ENCODE measurements at regions of chr1 and their contacts with region 1.

Region 1: DNA sequence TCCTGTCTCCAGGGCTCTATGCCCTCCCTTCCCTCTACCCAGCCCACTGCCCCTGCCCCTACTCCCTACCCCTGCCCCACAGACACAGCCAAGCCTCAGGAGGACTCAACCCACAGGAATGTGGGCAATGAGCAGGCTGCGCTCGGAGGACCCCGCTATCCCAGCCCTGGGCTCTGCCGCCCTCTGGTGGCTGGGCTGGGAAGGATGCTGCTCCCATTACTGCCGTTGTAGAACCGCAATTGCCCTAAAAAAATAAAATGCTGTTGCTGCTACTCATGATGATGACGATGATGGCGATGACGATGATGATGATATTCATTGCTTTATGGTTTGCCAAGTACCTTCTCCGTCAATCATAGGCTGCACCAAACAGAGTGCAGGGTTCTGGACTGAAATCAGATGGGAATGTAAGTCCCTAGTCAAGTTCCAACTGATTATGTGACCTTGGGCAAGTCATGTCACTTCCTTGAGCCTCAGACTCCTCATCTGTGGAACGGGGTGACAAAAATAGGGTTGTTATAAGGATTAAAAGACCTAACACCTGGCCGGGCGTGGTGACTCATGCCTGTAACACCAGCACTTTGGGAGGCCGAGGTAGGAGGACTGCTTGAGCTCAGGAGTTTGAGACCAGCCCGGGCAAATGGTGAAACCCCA is 24.6 kb downstream of the ARHGEF19 start:
- DNase-seq: peak; percentile 77 to 90
- ATAC-seq: peak; percentile 85 to 97 (median 96)
- H3K4me3 ChIP-seq: no peak overlapping the region
- H3K4me3 Mint-ChIP-seq: no peak overlapping the region
- H3K27ac ChIP-seq: no peak overlapping the region
- H3K27ac Mint-ChIP-seq: no peak overlapping the region
- H3K4me1 ChIP-seq: peaks cover 4% of the 10 kb centered on the region
- H3K4me1 Mint-ChIP-seq: no peaks in the 10 kb centered on the region
- H3K27me3 ChIP-seq: peaks cover 5% of the 10 kb centered on the region
- H3K27me3 Mint-ChIP-seq: peaks cover 0 to 6% of the 10 kb centered on the region in 2 donors
- CTCF ChIP-seq: peak; percentile 92

Region 2: GRCh38 chr1:16009030-16009709 is 178.7 kb before region 1 on chr1:
- intact Hi-C with region 1: loop called (anchors 1 kb)
- DNase-seq: peak; percentile 71 to 83
- ATAC-seq: peak; percentile 32 to 74 (median 66)
- H3K4me3 ChIP-seq: no peak overlapping the region
- H3K4me3 Mint-ChIP-seq: no peak overlapping the region
- H3K27ac ChIP-seq: no peak overlapping the region
- H3K27ac Mint-ChIP-seq: no peak overlapping the region
- H3K4me1 ChIP-seq: peaks cover 23% of the 10 kb centered on the region
- H3K4me1 Mint-ChIP-seq: peaks cover 0 to 15% of the 10 kb centered on the region in 2 donors
- H3K27me3 ChIP-seq: no peaks in the 10 kb centered on the region
- H3K27me3 Mint-ChIP-seq: no peaks in the 10 kb centered on the region
- CTCF ChIP-seq: peak; percentile 98

Region 3: DNA sequence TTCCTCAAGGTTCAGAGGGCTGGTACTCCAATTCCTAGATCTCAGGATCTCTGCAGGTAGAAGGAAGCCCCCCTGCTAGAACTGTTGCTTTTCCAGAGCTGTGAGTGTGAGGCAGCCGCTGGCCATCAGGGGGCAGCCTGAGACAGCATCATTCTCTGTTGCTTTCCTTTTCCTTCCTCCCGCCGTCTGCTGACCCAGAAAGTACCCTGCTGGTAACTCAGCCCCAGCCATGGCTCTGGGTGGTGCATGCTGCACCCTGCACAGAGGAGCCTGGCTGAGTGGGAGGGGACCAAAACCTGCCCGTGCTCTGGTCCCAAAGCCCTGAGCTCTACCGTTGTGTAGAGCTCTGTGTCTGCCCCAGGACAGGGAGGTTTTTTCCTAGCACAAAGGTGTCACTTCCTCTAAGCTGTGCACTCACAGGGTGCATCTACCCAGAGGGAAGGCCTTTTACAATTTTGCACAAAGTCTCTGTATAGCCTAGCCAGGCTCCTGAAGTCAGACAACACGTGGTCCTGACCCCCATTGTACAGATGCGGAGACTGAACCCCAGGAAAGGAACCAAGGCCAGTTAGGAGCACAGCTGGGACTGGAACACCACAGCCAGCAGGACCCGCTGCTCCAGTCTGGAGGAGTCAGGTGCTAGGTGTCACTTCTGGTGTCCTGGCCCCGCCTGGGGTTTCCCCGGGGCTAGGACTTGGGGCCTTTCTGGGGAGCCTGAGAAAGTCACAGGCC is 108.8 kb before region 1 on chr1:
- intact Hi-C with region 1: loop called (anchors 1 kb)
- DNase-seq: peak; percentile 64 to 88
- ATAC-seq: peak; percentile 80 to 89 (median 88)
- H3K4me3 ChIP-seq: no peak overlapping the region
- H3K4me3 Mint-ChIP-seq: peak overlapping the region; percentile 82
- H3K27ac ChIP-seq: peak overlapping the region; percentile 31
- H3K27ac Mint-ChIP-seq: peak overlapping the region; percentile 50 to 73
- H3K4me1 ChIP-seq: peaks cover 21% of the 10 kb centered on the region
- H3K4me1 Mint-ChIP-seq: peaks cover 6 to 9% of the 10 kb centered on the region in 2 donors
- H3K27me3 ChIP-seq: peaks cover 4% of the 10 kb centered on the region
- H3K27me3 Mint-ChIP-seq: peaks cover 5 to 15% of the 10 kb centered on the region in 2 donors
- CTCF ChIP-seq: peak; percentile 78

Measured in natural killer cell (primary cell).